ENCODE measurements at regions of chr16 and their contacts with region 1.

Region 1: DNA sequence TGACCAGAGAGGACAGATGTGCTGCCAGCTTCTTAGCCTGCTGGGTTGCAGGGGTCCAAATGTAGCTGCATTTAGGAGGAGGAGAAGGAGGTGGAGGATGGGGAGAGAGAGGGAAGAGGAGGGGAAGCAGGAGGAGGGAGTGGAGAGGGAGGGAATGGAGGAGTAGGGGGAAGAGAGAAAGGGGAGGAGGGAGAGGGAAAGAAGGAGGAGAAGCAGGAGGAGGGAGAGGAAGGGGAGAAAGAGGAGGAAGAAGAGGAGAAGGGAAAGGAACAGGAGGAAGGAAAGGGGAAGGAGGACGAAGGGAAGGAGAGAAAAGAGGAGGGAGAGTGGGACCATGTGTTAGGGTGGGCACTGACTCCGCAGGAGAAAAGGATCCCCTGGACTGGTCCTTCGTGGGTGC is 108.5 kb downstream of the ABCC12 start:
- DNase-seq: no peak
- H3K4me3 Mint-ChIP-seq: no peak overlapping the region
- H3K27ac Mint-ChIP-seq: no peak overlapping the region
- H3K4me1 Mint-ChIP-seq: no peaks in the 10 kb centered on the region
- H3K27me3 Mint-ChIP-seq: peaks cover 5% of the 10 kb centered on the region

Region 2: DNA sequence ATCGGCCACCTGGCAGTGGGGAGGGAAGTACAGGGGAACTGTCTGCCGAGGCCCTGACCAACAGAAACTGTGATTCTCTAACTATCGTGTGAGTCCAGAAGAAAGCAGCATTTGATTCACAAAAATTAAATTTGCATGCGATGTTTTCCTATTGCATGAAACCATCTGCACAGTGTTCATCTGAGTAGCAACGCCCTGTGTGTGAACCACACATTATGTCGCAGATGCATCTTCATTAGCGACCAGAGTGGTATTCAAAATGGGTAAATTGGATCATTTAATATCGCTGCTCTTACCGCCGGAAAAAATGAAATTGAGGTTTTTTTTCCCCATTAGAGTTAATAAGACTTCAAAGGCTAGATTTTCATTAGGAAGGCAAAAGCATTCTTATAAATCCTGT is 152.1 kb before region 1 on chr16:
- CTCF ChIA-PET with region 1: no interaction called
- POLR2A ChIA-PET with region 1: no interaction called
- DNase-seq: no peak
- H3K4me3 Mint-ChIP-seq: no peak overlapping the region
- H3K27ac Mint-ChIP-seq: no peak overlapping the region
- H3K4me1 Mint-ChIP-seq: no peaks in the 10 kb centered on the region
- H3K27me3 Mint-ChIP-seq: no peaks in the 10 kb centered on the region

Region 3: DNA sequence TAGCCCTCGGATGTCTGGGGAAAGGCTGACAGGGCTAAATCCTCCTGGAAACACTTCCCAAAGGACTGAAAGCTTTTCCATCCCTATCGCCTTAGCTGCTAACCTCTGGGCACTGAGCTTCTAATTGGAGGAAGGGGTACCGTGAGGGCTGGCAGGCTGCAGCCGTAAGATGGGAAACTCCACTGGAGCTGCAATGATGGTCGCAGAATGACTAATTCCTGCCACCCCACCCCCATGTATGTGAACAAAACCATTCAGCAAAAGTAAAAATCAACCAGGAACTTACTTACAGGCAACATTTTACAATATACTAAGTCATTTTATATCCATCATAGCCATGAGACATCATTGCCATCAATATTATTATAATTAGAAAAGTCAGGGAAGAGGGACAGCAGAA is 24.8 kb before region 1 on chr16:
- CTCF ChIA-PET with region 1: no interaction called
- POLR2A ChIA-PET with region 1: no interaction called
- DNase-seq: no peak
- H3K4me3 Mint-ChIP-seq: no peak overlapping the region
- H3K27ac Mint-ChIP-seq: no peak overlapping the region
- H3K4me1 Mint-ChIP-seq: no peaks in the 10 kb centered on the region
- H3K27me3 Mint-ChIP-seq: peaks cover 2% of the 10 kb centered on the region

Region 4: GRCh38 chr16:48062681-48063080 is 15.4 kb after region 1 on chr16:
- CTCF ChIA-PET with region 1: no interaction called
- POLR2A ChIA-PET with region 1: no interaction called
- DNase-seq: no peak
- H3K4me3 Mint-ChIP-seq: no peak overlapping the region
- H3K27ac Mint-ChIP-seq: no peak overlapping the region
- H3K4me1 Mint-ChIP-seq: no peaks in the 10 kb centered on the region
- H3K27me3 Mint-ChIP-seq: peaks cover 2% of the 10 kb centered on the region

Region 5: DNA sequence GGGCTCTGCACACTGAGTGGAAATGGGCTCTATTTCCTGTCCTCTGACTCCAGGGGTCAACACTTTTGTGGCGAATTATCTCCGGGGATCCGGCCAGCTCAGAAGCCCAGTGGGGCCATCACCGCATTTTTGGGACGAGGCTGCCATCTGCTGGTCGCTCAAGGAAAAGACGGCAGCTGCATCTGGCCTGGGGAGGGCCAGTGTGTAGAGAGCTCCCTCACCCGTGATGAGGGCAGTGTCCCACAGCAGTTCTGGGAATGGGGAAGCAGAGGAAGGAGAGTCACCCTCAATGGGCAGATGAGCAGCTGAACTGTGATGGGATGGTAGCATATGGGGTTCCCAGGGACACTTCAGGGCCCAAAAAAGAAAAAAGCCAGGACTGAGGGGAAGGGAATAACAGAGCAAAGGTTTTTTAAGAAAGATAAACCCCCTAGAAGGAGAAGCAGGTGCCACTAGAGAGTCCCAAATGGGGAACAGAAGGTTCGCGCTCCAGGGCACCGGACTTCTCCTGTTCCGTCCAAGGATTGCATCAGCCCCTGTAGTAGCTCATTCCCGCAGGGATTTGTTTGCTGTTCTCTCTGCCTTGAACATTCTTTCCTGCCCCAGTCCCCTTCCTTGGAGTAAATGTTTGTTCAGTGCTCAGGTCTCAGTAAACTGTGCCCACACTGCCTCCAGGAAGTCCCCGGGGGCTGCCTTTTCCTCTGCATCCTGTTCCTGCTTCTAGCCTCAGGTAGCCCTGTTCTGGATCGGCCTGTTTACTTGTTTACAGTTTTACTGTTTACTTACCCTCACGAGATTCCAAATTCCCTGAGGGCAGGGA is 117.8 kb after region 1 on chr16:
- CTCF ChIA-PET with region 1: interaction called, 12 read pairs
- POLR2A ChIA-PET with region 1: no interaction called
- DNase-seq: peak; percentile 70
- H3K4me3 Mint-ChIP-seq: no peak overlapping the region
- H3K27ac Mint-ChIP-seq: no peak overlapping the region
- H3K4me1 Mint-ChIP-seq: peaks cover 12% of the 10 kb centered on the region
- H3K27me3 Mint-ChIP-seq: peaks cover 4% of the 10 kb centered on the region